IMR-90 (cell line): ENCODE measurements at regions of chr16 and their contacts with region 1.

Region 1: GRCh38 chr16:69132424-69133252 is at the starts of genes CHTF8 and UTP4:
- DNase-seq: peak; percentile 76
- ATAC-seq: peak; percentile 85
- H3K4me3 ChIP-seq: peak within 1 kb of the TSS; percentile 91
- H3K27ac ChIP-seq: peak within 1 kb of the TSS; percentile 95
- H3K4me1 ChIP-seq: no peaks in the 10 kb centered on the region
- H3K27me3 ChIP-seq: no peaks in the 10 kb centered on the region
- CTCF ChIP-seq: no peak
- POLR2A ChIP-seq: peak; percentile 94
- RAD21 ChIP-seq: no peak
- total RNA-seq, gene CHTF8: 40.8 and 47.1 TPM in 2 replicates
- total RNA-seq, gene UTP4: 30.0 and 32.1 TPM in 2 replicates

Region 2: DNA sequence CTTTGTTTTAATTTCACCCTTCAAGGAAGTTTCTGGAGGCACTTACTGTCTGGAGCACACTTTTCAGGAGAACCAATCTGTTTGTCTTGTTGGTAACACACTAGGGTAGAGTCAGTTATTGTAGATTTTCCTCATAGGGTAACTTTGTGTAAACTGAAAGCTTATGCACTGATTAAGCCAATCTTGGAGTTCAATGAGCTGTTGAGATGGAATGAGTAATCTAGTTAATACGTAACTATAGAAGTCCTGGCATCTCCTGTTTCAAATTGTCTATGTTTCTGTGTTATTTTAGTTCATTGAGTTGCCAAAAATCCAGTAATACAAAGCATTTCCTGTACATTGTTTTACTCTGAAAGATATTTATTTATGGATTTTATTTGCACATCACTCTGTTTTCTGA is 138.8 kb before region 1 on chr16:
- CTCF ChIA-PET with region 1: no interaction called
- POLR2A ChIA-PET with region 1: no interaction called
- dilution Hi-C with region 1: no loop called
- in situ Hi-C with region 1: no loop called
- intact Hi-C with region 1: loop called (anchors 5 kb)
- DNase-seq: peak; percentile 97
- ATAC-seq: peak; percentile 91
- H3K4me3 ChIP-seq: no peak overlapping the region
- H3K27ac ChIP-seq: peak overlapping the region; percentile 73; the same call in 1 of the 2 replicates
- H3K4me1 ChIP-seq: peaks cover 16% of the 10 kb centered on the region
- H3K27me3 ChIP-seq: no peaks in the 10 kb centered on the region
- CTCF ChIP-seq: no peak
- POLR2A ChIP-seq: no peak
- RAD21 ChIP-seq: no peak

Region 3: GRCh38 chr16:69089091-69089910 is 43.3 kb before region 1 on chr16:
- CTCF ChIA-PET with region 1: no interaction called
- POLR2A ChIA-PET with region 1: no interaction called
- dilution Hi-C with region 1: no loop called
- in situ Hi-C with region 1: no loop called
- intact Hi-C with region 1: no loop called
- DNase-seq: peak; percentile 53
- ATAC-seq: peak; percentile 87
- H3K4me3 ChIP-seq: no peak overlapping the region
- H3K27ac ChIP-seq: no peak overlapping the region
- H3K4me1 ChIP-seq: peaks cover 7% of the 10 kb centered on the region
- H3K27me3 ChIP-seq: no peaks in the 10 kb centered on the region
- CTCF ChIP-seq: no peak
- POLR2A ChIP-seq: no peak
- RAD21 ChIP-seq: no peak

Region 4: DNA sequence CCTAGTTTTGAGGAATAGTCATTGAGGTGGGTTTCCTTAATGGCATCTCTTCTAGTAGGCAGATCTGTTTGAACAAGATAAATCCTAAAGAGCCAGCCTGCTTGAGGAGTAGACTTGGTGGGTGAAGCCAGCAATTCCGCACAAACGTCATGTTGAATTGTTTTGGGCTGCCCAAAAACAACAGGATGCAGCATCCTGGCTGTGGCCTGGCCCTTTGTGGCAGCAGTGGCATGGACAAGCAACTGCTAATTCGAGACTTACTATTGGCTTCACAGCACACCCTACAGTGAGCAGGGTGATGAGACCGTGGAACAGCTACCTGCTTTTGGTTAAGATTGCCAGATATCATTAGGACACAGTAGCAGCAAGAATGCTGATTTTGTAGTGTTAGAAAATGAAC is 169.2 kb after region 1 on chr16:
- CTCF ChIA-PET with region 1: no interaction called
- POLR2A ChIA-PET with region 1: interaction called, 27 read pairs
- dilution Hi-C with region 1: no loop called
- in situ Hi-C with region 1: no loop called
- intact Hi-C with region 1: no loop called
- DNase-seq: no peak
- ATAC-seq: no peak
- H3K4me3 ChIP-seq: no peak overlapping the region
- H3K27ac ChIP-seq: no peak overlapping the region
- H3K4me1 ChIP-seq: no peaks in the 10 kb centered on the region
- H3K27me3 ChIP-seq: no peaks in the 10 kb centered on the region
- CTCF ChIP-seq: no peak
- POLR2A ChIP-seq: no peak
- RAD21 ChIP-seq: no peak